Activated B cell treated with CpG ODN at 0.5 μM for 24 hours (primary cell): ENCODE measurements at regions of chr1 and their contacts with region 1.

Region 1: GRCh38 chr1:87328272-87329050 is at the start of gene LMO4:
- DNase-seq: peak; percentile 85
- ATAC-seq: peak; percentile 78
- H3K4me3 Mint-ChIP-seq: peak within 1 kb of the TSS; percentile 95
- H3K27ac Mint-ChIP-seq: peak within 1 kb of the TSS; percentile 97
- H3K4me1 Mint-ChIP-seq: peaks cover 47% of the 10 kb centered on the region
- H3K27me3 Mint-ChIP-seq: no peaks in the 10 kb centered on the region
- CTCF ChIP-seq: no peak
- total RNA-seq, gene LMO4: 31.2 and 37.1 TPM in 2 replicates

Region 2: GRCh38 chr1:86395771-86396497 is 932.5 kb before region 1 on chr1 and contains the start of gene ODF2L:
- CTCF ChIA-PET with region 1: no interaction called
- POLR2A ChIA-PET with region 1: interaction called, 4 read pairs
- intact Hi-C with region 1: loop called (anchors 2 kb)
- DNase-seq: peak; percentile 78
- ATAC-seq: peak; percentile 99
- H3K4me3 Mint-ChIP-seq: peak within 1 kb of the TSS; percentile 98
- H3K27ac Mint-ChIP-seq: peak within 1 kb of the TSS; percentile 95
- H3K4me1 Mint-ChIP-seq: peaks cover 45% of the 10 kb centered on the region
- H3K27me3 Mint-ChIP-seq: no peaks in the 10 kb centered on the region
- CTCF ChIP-seq: no peak
- total RNA-seq, gene ODF2L: 28.2 and 36.1 TPM in 2 replicates

Region 3: DNA sequence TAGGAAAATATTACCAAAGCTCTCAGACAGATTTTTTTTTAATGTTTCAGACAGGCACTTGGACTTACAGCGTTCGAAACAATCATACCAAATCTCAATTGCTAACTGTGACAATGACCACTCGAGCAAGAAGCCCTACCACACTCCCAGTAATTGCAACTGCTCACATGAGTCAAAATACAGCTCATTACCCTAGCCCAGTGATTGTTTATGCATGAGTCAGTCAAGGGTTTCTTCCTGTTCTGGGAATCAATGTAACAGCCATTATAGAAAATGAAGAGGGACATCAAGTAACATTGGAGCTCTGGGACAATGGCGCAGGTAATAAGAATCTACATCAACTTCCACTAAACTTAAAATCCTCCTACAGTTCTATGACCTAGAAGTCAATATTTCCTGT is 680.2 kb before region 1 on chr1:
- CTCF ChIA-PET with region 1: no interaction called
- POLR2A ChIA-PET with region 1: no interaction called
- intact Hi-C with region 1: no loop called
- DNase-seq: no peak
- ATAC-seq: peak; percentile 74
- H3K4me3 Mint-ChIP-seq: no peak overlapping the region
- H3K27ac Mint-ChIP-seq: no peak overlapping the region
- H3K4me1 Mint-ChIP-seq: peaks cover 10% of the 10 kb centered on the region
- H3K27me3 Mint-ChIP-seq: no peaks in the 10 kb centered on the region
- CTCF ChIP-seq: no peak

Region 4: GRCh38 chr1:87131809-87132283 is 196.6 kb before region 1 on chr1:
- CTCF ChIA-PET with region 1: no interaction called
- POLR2A ChIA-PET with region 1: no interaction called
- intact Hi-C with region 1: loop called (anchors 5 kb)
- DNase-seq: peak; percentile 66
- ATAC-seq: peak; percentile 97
- H3K4me3 Mint-ChIP-seq: peak overlapping the region; percentile 85
- H3K27ac Mint-ChIP-seq: no peak overlapping the region
- H3K4me1 Mint-ChIP-seq: peaks cover 10% of the 10 kb centered on the region
- H3K27me3 Mint-ChIP-seq: peaks cover 23% of the 10 kb centered on the region
- CTCF ChIP-seq: peak; percentile 74

Region 5: GRCh38 chr1:87588495-87588894 is 260.0 kb after region 1 on chr1:
- CTCF ChIA-PET with region 1: no interaction called
- POLR2A ChIA-PET with region 1: interaction called, 13 read pairs
- intact Hi-C with region 1: loop called (anchors 2 kb)
- DNase-seq: no peak
- ATAC-seq: peak; percentile 52
- H3K4me3 Mint-ChIP-seq: no peak overlapping the region
- H3K27ac Mint-ChIP-seq: peak overlapping the region; percentile 41
- H3K4me1 Mint-ChIP-seq: peaks cover 31% of the 10 kb centered on the region
- H3K27me3 Mint-ChIP-seq: no peaks in the 10 kb centered on the region
- CTCF ChIP-seq: no peak

Region 6: GRCh38 chr1:87864676-87865075 is 536.2 kb after region 1 on chr1:
- CTCF ChIA-PET with region 1: no interaction called
- POLR2A ChIA-PET with region 1: no interaction called
- intact Hi-C with region 1: loop called (anchors 2 kb)
- DNase-seq: no peak
- ATAC-seq: peak; percentile 58
- H3K4me3 Mint-ChIP-seq: peak overlapping the region; percentile 47
- H3K27ac Mint-ChIP-seq: peak overlapping the region; percentile 83
- H3K4me1 Mint-ChIP-seq: peaks cover 30% of the 10 kb centered on the region
- H3K27me3 Mint-ChIP-seq: no peaks in the 10 kb centered on the region
- CTCF ChIP-seq: no peak

Region 7: DNA sequence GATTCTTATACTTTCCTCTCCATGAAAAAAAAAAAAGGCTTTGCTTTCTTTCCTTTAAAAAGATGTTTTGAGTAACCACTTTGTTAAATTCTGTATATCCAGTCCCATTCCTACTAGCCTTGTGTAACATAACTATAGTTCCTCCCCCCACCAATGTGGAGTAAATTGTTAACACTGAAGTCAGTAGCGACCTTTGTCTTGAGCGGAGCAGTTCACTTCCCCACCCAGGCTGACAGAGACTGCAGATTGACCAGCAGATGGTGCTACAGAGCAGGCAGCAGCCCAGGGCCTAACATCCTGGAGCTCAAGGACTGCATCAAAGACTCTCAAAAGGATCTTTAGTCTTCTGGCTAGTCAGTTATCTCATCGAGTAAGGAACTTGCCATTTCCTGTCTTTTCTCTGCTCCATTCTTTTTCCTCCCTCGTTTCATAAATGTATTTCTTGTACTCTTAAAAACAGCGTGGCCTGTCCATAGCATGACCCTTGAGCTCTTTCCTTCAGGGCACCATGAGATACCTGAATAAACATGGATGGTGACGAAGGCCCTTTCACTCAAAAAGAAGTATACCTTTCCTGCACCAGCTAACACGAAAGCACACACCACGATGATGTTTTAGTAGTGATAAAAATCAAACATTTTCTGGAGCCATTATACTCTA is 852.1 kb after region 1 on chr1:
- CTCF ChIA-PET with region 1: no interaction called
- POLR2A ChIA-PET with region 1: interaction called, 3 read pairs
- intact Hi-C with region 1: loop called (anchors 5 kb)
- DNase-seq: peak; percentile 25
- ATAC-seq: peak; percentile 97
- H3K4me3 Mint-ChIP-seq: no peak overlapping the region
- H3K27ac Mint-ChIP-seq: no peak overlapping the region
- H3K4me1 Mint-ChIP-seq: peaks cover 3% of the 10 kb centered on the region
- H3K27me3 Mint-ChIP-seq: peaks cover 3% of the 10 kb centered on the region
- CTCF ChIP-seq: peak; percentile 56